IMR-90 (cell line): ENCODE measurements at regions of chr7 and their contacts with region 1.

Region 1: GRCh38 chr7:73429215-73429614 is 4.4 kb upstream of the FZD9 start:
- DNase-seq: peak; percentile 38
- ATAC-seq: no peak
- H3K4me3 ChIP-seq: no peak overlapping the region
- H3K27ac ChIP-seq: no peak overlapping the region
- H3K4me1 ChIP-seq: no peaks in the 10 kb centered on the region; the same call in 1 of the 2 replicates
- H3K27me3 ChIP-seq: no peaks in the 10 kb centered on the region
- CTCF ChIP-seq: no peak
- POLR2A ChIP-seq: no peak
- RAD21 ChIP-seq: no peak

Region 2: GRCh38 chr7:73351447-73352167 is 77.6 kb before region 1 on chr7:
- CTCF ChIA-PET with region 1: no interaction called
- POLR2A ChIA-PET with region 1: no interaction called
- dilution Hi-C with region 1: no loop called
- in situ Hi-C with region 1: no loop called
- intact Hi-C with region 1: loop called (anchors 5 kb)
- DNase-seq: no peak
- ATAC-seq: no peak
- H3K4me3 ChIP-seq: no peak overlapping the region
- H3K27ac ChIP-seq: no peak overlapping the region
- H3K4me1 ChIP-seq: no peaks in the 10 kb centered on the region; the same call in 1 of the 2 replicates
- H3K27me3 ChIP-seq: peaks cover 9% of the 10 kb centered on the region
- CTCF ChIP-seq: no peak
- POLR2A ChIP-seq: no peak
- RAD21 ChIP-seq: no peak

Region 3: GRCh38 chr7:73470208-73470607 is 41.0 kb after region 1 on chr7:
- CTCF ChIA-PET with region 1: no interaction called
- POLR2A ChIA-PET with region 1: interaction called, 31 read pairs
- dilution Hi-C with region 1: no loop called
- in situ Hi-C with region 1: no loop called
- intact Hi-C with region 1: no loop called
- DNase-seq: no peak
- ATAC-seq: no peak
- H3K4me3 ChIP-seq: no peak overlapping the region
- H3K27ac ChIP-seq: no peak overlapping the region
- H3K4me1 ChIP-seq: no peaks in the 10 kb centered on the region
- H3K27me3 ChIP-seq: no peaks in the 10 kb centered on the region
- CTCF ChIP-seq: no peak
- POLR2A ChIP-seq: no peak
- RAD21 ChIP-seq: no peak